Activated CD4-positive, alpha-beta T cell treated with anti-CD3 and anti-CD28 coated beads, Interleukin-2, amount 10 ng/mL, durations not matched to agents 24 days and 14 days (primary cell): ENCODE measurements at regions of chr14 and their contacts with region 1.

Region 1: DNA sequence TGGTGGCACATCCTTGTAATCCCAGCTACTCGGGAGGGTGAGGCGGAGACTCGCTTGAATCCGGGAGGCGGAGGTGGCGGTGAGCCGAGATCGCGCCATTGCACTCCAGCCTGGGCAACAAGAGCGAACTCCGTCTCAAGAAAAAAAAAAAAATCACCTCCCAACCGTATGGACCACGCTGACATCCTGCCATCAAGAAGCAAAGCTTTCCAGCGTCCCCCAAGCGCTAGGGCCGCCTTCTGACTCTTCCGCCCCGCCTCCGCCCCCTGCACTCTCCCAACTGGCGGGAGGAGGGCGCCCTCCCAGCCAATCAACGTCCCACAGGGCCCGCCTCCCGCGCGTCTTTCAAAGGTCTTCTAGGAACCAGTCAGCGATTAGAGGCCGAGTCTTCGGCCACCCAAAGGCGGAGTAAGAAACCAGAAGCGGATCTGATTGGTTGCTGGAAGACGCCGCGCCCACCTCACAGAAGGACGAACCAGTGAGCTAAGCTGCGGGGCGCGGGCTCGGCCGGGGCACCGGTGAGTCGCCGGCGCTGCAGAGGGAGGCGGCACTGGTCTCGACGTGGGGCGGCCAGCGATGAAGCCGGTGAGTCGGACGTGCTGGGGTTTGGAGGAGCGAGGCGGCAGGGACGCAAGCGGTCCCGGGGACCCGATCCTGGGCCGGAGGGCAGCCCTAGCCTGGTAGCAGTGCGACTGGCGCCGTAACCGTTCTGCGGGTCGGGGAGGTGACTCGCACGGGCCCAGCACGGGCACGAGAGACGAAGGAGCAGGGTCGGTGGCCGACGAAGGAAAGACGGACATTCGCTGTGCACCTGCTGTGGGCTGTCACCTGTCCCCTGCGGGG is at the start of gene CDKN3:
- DNase-seq: peak; percentile 100
- H3K4me3 Mint-ChIP-seq: peak within 1 kb of the TSS; percentile 92
- H3K27ac Mint-ChIP-seq: peak within 1 kb of the TSS; percentile 86
- H3K4me1 Mint-ChIP-seq: peaks cover 26% of the 10 kb centered on the region
- H3K27me3 Mint-ChIP-seq: peaks cover under 1% of the 10 kb centered on the region
- total RNA-seq, gene CDKN3: 42.5 and 50.8 TPM in 2 replicates

Region 2: DNA sequence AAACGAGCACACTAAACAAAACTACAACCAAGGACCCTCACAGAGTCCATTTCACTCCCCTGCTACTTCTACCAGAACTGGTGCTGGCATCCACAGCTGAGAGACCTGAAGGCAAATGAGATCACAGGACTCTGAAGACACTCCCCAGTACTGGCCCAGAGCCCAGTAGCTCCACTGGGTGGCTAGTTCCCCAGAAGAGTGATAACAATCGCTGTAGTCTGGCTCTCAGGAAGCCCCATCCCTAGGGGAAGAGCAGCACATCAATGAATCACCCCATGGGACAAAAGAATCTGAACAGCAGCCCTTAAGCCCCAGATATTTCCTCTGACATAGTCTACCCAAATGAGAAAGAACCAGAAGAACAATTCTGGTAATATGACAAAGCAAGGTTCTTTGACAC is 249.4 kb before region 1 on chr14:
- intact Hi-C with region 1: no loop called
- DNase-seq: no peak
- H3K4me3 Mint-ChIP-seq: no peak overlapping the region
- H3K27ac Mint-ChIP-seq: no peak overlapping the region
- H3K4me1 Mint-ChIP-seq: no peaks in the 10 kb centered on the region
- H3K27me3 Mint-ChIP-seq: peaks cover 2% of the 10 kb centered on the region

Region 3: DNA sequence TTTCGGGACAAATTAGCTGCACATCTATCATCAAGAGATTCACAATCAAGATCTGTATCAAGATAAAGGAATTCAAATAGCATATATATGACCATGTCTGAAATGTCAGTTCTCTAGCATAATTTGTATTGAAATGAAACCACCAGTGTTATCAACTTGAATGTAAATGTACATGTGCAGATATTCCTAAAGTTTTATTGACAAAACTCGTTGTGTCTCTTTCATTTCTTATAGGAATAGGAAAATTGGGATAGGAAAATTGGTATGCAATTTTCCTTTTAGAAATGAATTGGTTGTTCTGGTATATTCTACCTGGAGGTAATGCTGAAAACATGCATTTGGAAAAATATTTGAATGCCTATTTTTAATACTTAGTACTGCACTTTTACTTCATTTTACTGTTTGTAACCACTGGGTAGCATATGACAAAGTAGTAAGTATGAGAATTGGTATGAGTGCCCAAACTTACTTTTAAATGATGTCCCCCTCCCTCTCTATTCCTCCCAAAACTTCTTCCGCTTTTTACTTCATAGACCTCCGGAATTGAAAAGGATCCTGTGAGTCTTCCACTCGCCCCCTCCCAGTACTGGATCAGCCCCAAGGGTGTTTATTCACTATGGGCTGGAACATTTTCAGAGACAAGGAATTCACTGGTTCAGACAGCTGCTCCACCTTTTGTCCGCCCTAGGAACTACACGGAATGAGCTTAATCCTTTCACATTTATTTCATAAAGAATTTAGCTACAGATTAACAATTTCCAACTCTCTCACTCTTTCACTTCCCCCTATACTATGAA is 23.5 kb after region 1 on chr14:
- intact Hi-C with region 1: loop called (anchors 2 kb)
- DNase-seq: no peak
- H3K4me3 Mint-ChIP-seq: no peak overlapping the region
- H3K27ac Mint-ChIP-seq: no peak overlapping the region
- H3K4me1 Mint-ChIP-seq: peaks cover 9% of the 10 kb centered on the region
- H3K27me3 Mint-ChIP-seq: no peaks in the 10 kb centered on the region

Region 4: DNA sequence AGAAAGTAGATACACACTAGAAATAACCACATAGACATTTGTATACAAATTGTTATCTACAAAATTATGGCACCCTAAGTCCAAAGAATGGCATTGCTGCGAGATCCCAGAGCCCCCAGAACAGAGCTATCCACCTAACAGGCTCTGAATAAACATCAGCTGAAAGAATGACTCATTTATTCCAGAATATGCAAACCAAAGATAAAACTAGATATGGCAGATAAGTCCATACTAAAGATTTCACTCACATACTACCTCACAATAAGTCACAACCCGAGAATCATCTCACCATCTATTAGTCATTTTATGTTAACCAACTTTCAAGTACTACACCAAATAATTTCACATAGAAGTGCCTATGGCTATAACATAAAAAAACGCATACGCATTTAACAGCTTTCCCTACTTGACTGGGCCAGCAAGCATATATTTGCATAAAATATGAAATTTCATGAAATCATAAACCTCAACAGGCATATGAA is 38.8 kb after region 1 on chr14:
- intact Hi-C with region 1: loop called (anchors 1 kb)
- DNase-seq: no peak
- H3K4me3 Mint-ChIP-seq: peak overlapping the region; percentile 74
- H3K27ac Mint-ChIP-seq: peak overlapping the region; percentile 89
- H3K4me1 Mint-ChIP-seq: peaks cover 62% of the 10 kb centered on the region
- H3K27me3 Mint-ChIP-seq: no peaks in the 10 kb centered on the region

Region 5: DNA sequence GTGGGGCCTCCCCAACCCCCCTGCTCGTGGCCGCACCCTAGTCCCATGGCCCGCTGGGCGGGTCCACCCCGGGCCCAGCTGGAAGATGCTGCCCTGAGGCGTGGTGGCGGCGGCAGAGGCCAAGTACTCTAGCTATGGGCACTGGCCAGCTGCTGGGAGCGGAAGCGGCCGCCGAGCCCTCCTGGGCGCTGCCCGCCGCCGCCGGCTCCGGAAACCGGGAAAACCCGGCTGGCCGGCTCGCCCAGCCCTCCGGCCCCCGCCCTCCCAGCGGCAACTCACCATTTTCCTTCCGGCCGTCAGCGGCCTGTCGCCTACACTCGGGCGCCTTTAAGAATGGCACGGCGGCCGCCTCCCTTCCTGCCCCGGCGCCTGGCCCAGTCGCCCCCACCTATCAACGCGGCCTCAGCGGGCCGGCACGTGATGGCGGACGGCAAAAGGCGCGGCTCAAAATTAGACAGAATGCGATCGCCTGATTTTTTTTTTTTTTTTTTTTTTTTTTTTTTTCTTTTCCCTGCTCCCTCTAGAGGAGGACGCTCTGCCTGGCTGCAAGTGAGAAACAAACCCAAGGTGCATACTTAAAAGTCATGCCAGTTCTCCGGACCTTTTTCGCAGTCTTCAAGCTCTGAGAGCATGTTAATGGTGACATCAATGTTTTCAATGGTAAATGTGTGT is 92.1 kb after region 1 on chr14 and contains the start of gene GMFB:
- intact Hi-C with region 1: loop called (anchors 1 kb)
- DNase-seq: peak; percentile 96
- H3K4me3 Mint-ChIP-seq: peak within 1 kb of the TSS; percentile 89
- H3K27ac Mint-ChIP-seq: peak within 1 kb of the TSS; percentile 86
- H3K4me1 Mint-ChIP-seq: peaks cover 47% of the 10 kb centered on the region
- H3K27me3 Mint-ChIP-seq: peaks cover 3% of the 10 kb centered on the region
- total RNA-seq, gene GMFB: 40.9 and 41.1 TPM in 2 replicates

Region 6: GRCh38 chr14:54509546-54510501 is 113.1 kb after region 1 on chr14 and contains the start of gene CGRRF1:
- intact Hi-C with region 1: loop called (anchors 5 kb)
- DNase-seq: peak; percentile 99
- H3K4me3 Mint-ChIP-seq: peak within 1 kb of the TSS; percentile 96
- H3K27ac Mint-ChIP-seq: peak within 1 kb of the TSS; percentile 88
- H3K4me1 Mint-ChIP-seq: peaks cover 29% of the 10 kb centered on the region
- H3K27me3 Mint-ChIP-seq: peaks cover 8% of the 10 kb centered on the region
- total RNA-seq, gene CGRRF1: 7.8 and 11.9 TPM in 2 replicates